WTC11 (cell line): ENCODE measurements at regions of chrX and their contacts with region 1.

Region 1: DNA sequence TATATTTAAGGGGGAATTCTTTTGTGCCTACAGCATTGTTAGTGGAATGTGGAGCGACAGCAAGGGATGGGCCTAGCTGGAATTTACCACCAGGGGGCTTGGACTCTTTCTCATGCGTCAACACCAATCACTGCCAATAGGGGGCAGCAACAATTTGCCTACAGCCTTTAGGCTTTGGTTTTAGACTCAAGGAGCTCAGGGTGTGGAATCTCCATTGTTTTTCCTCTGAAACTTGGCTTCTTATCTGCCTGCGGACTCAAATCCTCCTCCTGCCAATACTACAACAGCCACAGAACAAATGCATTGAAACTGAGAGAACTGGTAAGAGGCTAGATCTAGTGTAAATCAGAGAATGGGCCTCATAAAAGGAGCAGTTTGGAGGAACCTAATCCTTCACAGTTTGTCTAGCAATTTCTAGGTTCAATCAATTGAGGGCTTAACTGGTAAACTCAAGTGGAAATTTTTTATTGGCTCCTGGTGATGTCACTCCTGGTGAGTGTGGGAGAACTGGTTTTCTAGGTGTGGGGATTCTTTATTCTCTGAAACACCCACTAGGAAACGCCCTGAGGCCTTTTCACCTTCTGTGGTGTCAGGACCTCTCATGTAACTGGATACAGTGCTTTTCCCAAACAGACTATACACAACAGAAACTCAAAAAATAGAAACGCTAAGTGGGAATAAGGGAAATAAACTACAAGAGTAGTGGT is 27.9 kb upstream of the TMSB4X start:
- DNase-seq: peak; percentile 79
- ATAC-seq: peak; percentile 82
- H3K4me3 Mint-ChIP-seq: no peak overlapping the region
- H3K27ac Mint-ChIP-seq: peak overlapping the region; percentile 89
- H3K4me1 Mint-ChIP-seq: peaks cover 31% of the 10 kb centered on the region
- H3K27me3 Mint-ChIP-seq: no peaks in the 10 kb centered on the region
- CTCF ChIP-seq: peak; percentile 87

Region 2: DNA sequence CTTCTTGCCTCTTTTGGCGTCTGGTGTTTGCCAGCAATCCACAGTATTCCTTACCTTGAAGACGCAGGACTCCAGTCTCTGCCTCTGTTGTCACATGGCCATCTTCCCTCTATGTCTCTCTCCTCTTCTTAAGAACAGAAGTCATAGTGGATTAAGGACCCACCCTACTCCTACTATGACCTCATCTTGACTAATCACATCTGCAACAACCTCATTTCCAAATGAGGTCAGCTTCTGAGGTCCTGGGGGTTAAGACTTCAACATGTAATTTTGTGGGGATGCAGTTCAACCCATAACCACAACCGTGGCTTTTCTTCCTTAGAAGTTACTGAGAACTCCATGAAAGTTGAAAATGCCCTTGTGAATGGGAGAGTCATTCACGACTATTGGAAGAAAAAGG is 17.3 kb before region 1 on chrX:
- CTCF ChIA-PET with region 1: no interaction called
- POLR2A ChIA-PET with region 1: no interaction called
- DNase-seq: no peak
- ATAC-seq: no peak
- H3K4me3 Mint-ChIP-seq: no peak overlapping the region
- H3K27ac Mint-ChIP-seq: no peak overlapping the region
- H3K4me1 Mint-ChIP-seq: no peaks in the 10 kb centered on the region
- H3K27me3 Mint-ChIP-seq: no peaks in the 10 kb centered on the region
- CTCF ChIP-seq: no peak

Region 3: DNA sequence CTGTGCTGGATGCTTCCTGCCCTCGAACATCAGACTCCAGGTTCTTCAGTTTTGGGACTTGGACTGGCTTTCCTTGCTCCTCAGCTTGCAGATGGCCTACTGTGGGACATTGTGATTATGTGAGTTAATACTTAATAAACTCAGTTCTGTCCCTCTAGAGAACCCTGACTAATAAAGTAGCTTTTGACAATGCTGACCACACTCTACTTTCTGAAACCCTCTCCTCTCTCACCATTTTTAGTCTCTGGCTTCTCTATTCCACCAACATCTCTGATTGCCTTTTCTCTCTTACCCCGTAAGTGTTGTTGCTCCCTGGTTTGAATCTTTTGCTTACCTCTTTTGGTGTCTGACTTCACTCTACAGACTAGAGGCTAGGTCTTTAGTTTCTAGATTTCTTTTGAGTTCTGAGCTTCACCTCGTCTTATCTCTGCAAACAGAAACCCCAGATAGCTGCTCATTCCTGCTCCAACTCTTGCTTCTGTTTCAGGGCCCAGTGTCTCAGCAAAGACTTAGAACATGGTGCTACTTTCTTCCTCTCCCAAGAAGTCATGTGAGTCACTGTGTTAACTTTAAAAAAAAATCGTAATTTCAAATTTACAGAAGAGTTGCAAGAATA is 39.3 kb after region 1 on chrX:
- CTCF ChIA-PET with region 1: no interaction called
- POLR2A ChIA-PET with region 1: no interaction called
- DNase-seq: no peak
- ATAC-seq: no peak
- H3K4me3 Mint-ChIP-seq: no peak overlapping the region
- H3K27ac Mint-ChIP-seq: no peak overlapping the region
- H3K4me1 Mint-ChIP-seq: peaks cover 11% of the 10 kb centered on the region
- H3K27me3 Mint-ChIP-seq: peaks cover 3% of the 10 kb centered on the region
- CTCF ChIP-seq: no peak

Region 4: GRCh38 chrX:13487731-13488523 is 540.9 kb after region 1 on chrX:
- CTCF ChIA-PET with region 1: interaction called, 43 read pairs
- POLR2A ChIA-PET with region 1: interaction called, 5 read pairs
- DNase-seq: peak; percentile 9
- ATAC-seq: peak; percentile 60
- H3K4me3 Mint-ChIP-seq: no peak overlapping the region
- H3K27ac Mint-ChIP-seq: peak overlapping the region; percentile 68; the same call in 1 of the 2 replicates
- H3K4me1 Mint-ChIP-seq: peaks cover 18% of the 10 kb centered on the region
- H3K27me3 Mint-ChIP-seq: no peaks in the 10 kb centered on the region
- CTCF ChIP-seq: 0 out of 2 replicates have a peak, but pooled peaks have one; percentile 17